Activated B cell treated with CpG ODN at 0.5 μM for 24 hours (primary cell): ENCODE measurements at regions of chr16 and their contacts with region 1.

Region 1: DNA sequence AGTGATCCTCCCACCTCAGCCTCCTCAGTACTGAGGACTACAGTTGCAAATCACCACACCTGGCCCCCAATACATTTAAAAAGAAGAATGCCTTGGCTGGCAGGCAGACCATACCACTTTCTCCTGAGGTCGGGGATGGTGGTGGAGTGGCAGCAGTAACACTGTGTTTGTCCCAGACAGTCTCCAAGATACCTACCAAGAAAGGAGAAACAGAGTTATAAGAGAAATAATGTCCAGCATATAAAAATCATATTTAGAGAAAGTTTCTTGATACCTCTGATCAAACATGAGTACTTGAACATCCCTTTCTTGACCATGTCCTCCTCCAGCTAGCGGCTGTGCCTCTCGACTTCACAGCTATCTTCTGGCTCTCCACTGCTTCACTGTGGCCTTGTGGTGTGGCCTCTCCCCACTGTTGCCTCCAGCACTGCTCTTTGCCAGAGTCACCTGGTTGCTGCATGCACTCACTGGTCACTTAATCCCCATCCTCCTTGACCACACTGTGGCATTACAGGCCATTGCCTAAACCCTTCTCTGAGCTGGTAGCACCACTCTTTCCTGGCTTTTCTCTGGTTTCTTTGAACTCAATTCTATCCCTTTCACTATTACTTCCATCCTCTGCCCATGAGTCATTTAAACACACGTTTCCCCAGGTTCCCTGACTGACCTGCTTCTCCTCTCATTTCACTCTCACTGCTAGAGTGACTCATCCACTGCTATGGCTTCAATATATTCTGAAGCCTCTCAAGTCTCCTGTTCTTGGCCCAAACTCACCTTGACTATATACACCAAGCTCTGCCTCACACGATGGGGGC is 45.2 kb downstream of the XPO6 start:
- DNase-seq: no peak
- ATAC-seq: peak; percentile 31
- H3K4me3 Mint-ChIP-seq: no peak overlapping the region
- H3K27ac Mint-ChIP-seq: peak overlapping the region; percentile 69
- H3K4me1 Mint-ChIP-seq: peaks cover 65% of the 10 kb centered on the region
- H3K27me3 Mint-ChIP-seq: no peaks in the 10 kb centered on the region
- CTCF ChIP-seq: no peak

Region 2: GRCh38 chr16:28151210-28151609 is 15.4 kb before region 1 on chr16:
- CTCF ChIA-PET with region 1: interaction called, 3 read pairs
- POLR2A ChIA-PET with region 1: interaction called, 3 read pairs
- intact Hi-C with region 1: loop called (anchors 2 kb)
- DNase-seq: no peak
- ATAC-seq: no peak
- H3K4me3 Mint-ChIP-seq: no peak overlapping the region
- H3K27ac Mint-ChIP-seq: no peak overlapping the region
- H3K4me1 Mint-ChIP-seq: peaks cover 34% of the 10 kb centered on the region
- H3K27me3 Mint-ChIP-seq: no peaks in the 10 kb centered on the region
- CTCF ChIP-seq: no peak

Region 3: DNA sequence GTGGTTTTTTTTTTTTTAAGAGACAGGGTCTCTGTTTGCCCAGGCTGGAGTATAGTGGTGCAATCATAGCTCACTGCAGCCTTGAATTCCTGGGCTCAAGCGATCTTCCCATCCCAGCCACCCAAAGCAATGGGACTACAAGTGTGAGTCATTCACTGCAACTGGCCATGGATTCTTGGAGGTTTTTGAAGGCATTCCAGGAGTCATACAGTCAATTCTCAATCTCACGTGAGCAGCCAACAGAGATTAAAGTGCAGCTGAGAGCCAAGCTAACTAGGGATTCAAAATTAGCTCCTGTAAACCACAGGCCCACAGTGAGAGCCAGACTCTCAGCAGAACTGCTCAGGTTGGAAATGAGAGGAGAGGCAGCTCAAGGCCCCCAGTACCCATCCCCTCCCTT is 14.9 kb after region 1 on chr16:
- CTCF ChIA-PET with region 1: no interaction called
- POLR2A ChIA-PET with region 1: interaction called, 7 read pairs
- intact Hi-C with region 1: loop called (anchors 1 kb)
- DNase-seq: no peak
- ATAC-seq: no peak
- H3K4me3 Mint-ChIP-seq: peak overlapping the region; percentile 77
- H3K27ac Mint-ChIP-seq: peak overlapping the region; percentile 89
- H3K4me1 Mint-ChIP-seq: peaks cover 81% of the 10 kb centered on the region
- H3K27me3 Mint-ChIP-seq: no peaks in the 10 kb centered on the region
- CTCF ChIP-seq: no peak

Region 4: GRCh38 chr16:28204622-28205021 is 38.0 kb after region 1 on chr16:
- CTCF ChIA-PET with region 1: no interaction called
- POLR2A ChIA-PET with region 1: no interaction called
- intact Hi-C with region 1: no loop called
- DNase-seq: no peak
- ATAC-seq: no peak
- H3K4me3 Mint-ChIP-seq: no peak overlapping the region
- H3K27ac Mint-ChIP-seq: no peak overlapping the region
- H3K4me1 Mint-ChIP-seq: peaks cover 39% of the 10 kb centered on the region
- H3K27me3 Mint-ChIP-seq: no peaks in the 10 kb centered on the region
- CTCF ChIP-seq: no peak

Region 5: DNA sequence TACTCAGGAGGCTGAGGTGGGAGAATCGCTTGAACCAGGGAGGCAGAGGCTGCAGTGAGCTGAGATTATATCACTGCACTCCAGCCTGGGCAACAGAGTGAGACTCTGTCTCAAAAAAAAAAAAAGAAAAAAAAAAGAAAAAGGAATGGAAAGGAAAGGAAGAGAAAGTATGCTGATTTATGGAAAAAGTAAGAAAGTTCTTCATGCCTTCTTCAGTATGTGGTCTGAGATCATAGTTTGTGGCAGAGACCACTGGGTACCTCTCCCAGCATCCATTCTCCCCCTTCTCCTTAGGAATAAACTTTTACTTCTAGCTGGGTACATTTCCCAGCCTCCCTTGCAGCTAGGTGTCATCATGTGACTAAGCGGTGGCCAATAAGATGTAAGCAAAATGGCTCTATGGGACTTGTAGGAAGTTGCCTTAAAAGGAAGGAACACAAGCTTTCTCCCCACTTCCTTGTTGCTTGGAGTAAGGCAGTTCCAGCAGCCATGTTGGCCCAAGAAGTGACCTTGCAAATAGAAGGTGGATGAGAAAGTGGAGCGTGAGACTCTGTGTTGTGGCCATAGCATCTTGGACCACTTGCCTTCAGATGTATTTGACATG is 71.3 kb after region 1 on chr16:
- CTCF ChIA-PET with region 1: no interaction called
- POLR2A ChIA-PET with region 1: no interaction called
- intact Hi-C with region 1: no loop called
- DNase-seq: no peak
- ATAC-seq: no peak
- H3K4me3 Mint-ChIP-seq: no peak overlapping the region
- H3K27ac Mint-ChIP-seq: no peak overlapping the region
- H3K4me1 Mint-ChIP-seq: no peaks in the 10 kb centered on the region
- H3K27me3 Mint-ChIP-seq: peaks cover 5% of the 10 kb centered on the region
- CTCF ChIP-seq: no peak